CD4-positive, alpha-beta memory T cell (primary cell): ENCODE measurements at regions of chr3 and their contacts with region 1.

Region 1: GRCh38 chr3:141523615-141524375 is 37.0 kb downstream of the RASA2 start:
- DNase-seq: no peak
- H3K4me3 ChIP-seq: no peak overlapping the region
- H3K4me3 Mint-ChIP-seq: peak overlapping the region in 2 of 8 donors; percentile 13 to 44
- H3K27ac ChIP-seq: no peak overlapping the region
- H3K27ac Mint-ChIP-seq: peak overlapping the region in 5 of 7 donors; percentile 29 to 84 (median 52)
- H3K4me1 ChIP-seq: peaks cover 66% of the 10 kb centered on the region
- H3K4me1 Mint-ChIP-seq: peaks cover 51 to 87% (median 70%) of the 10 kb centered on the region in 4 donors
- H3K27me3 ChIP-seq: no peaks in the 10 kb centered on the region
- H3K27me3 Mint-ChIP-seq: no peaks in the 10 kb centered on the region

Region 2: DNA sequence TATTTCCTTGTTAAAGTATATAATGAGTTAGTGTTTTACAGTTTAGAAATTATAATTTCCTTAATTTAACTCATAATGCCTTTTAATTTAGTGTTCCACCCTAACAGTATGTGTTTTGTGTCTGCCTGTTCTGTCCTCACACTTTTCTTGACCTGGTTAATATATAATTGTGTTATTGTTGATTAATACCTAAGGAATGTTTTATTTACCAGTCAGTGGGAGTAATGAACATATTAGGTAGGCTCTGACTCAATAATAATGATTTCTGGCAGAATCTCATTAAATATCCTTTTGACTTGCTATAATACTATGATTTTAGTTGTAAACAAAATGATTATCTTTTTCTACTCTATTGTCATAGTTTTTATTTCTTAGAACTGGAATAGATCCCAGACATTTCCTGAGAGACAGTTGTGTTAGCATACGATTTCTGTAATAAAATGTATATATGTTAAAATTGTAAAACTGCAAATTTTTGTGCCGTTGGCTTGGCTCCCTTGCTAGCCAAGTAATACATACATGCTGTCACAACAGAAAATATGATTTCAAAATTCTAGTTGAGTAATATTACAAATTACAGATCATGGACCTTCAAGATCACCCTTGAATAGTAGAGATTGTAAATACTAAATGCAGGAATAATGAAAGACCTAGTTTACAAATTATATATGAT is 14.9 kb after region 1 on chr3:
- CTCF ChIA-PET with region 1: no interaction called
- POLR2A ChIA-PET with region 1: interaction called, 3 read pairs
- intact Hi-C with region 1: loop called (anchors 2 kb)
- DNase-seq: no peak
- H3K4me3 ChIP-seq: no peak overlapping the region
- H3K4me3 Mint-ChIP-seq: no peak overlapping the region
- H3K27ac ChIP-seq: no peak overlapping the region
- H3K27ac Mint-ChIP-seq: peak overlapping the region in 3 of 7 donors; percentile 22 to 50 (median 28)
- H3K4me1 ChIP-seq: peaks cover 39% of the 10 kb centered on the region
- H3K4me1 Mint-ChIP-seq: peaks cover 31 to 55% (median 40%) of the 10 kb centered on the region in 4 donors
- H3K27me3 ChIP-seq: no peaks in the 10 kb centered on the region
- H3K27me3 Mint-ChIP-seq: no peaks in the 10 kb centered on the region

Region 3: GRCh38 chr3:141597931-141598330 is 74.1 kb after region 1 on chr3:
- CTCF ChIA-PET with region 1: no interaction called
- POLR2A ChIA-PET with region 1: no interaction called
- intact Hi-C with region 1: no loop called
- DNase-seq: no peak
- H3K4me3 ChIP-seq: no peak overlapping the region
- H3K4me3 Mint-ChIP-seq: no peak overlapping the region
- H3K27ac ChIP-seq: no peak overlapping the region
- H3K27ac Mint-ChIP-seq: peak overlapping the region in 1 of 7 donors; percentile 10
- H3K4me1 ChIP-seq: no peaks in the 10 kb centered on the region
- H3K4me1 Mint-ChIP-seq: peaks cover 0 to 4% (median 0%) of the 10 kb centered on the region in 4 donors
- H3K27me3 ChIP-seq: no peaks in the 10 kb centered on the region
- H3K27me3 Mint-ChIP-seq: no peaks in the 10 kb centered on the region